PC-3 (cell line): ENCODE measurements at regions of chr2 and their contacts with region 1.

Region 1: DNA sequence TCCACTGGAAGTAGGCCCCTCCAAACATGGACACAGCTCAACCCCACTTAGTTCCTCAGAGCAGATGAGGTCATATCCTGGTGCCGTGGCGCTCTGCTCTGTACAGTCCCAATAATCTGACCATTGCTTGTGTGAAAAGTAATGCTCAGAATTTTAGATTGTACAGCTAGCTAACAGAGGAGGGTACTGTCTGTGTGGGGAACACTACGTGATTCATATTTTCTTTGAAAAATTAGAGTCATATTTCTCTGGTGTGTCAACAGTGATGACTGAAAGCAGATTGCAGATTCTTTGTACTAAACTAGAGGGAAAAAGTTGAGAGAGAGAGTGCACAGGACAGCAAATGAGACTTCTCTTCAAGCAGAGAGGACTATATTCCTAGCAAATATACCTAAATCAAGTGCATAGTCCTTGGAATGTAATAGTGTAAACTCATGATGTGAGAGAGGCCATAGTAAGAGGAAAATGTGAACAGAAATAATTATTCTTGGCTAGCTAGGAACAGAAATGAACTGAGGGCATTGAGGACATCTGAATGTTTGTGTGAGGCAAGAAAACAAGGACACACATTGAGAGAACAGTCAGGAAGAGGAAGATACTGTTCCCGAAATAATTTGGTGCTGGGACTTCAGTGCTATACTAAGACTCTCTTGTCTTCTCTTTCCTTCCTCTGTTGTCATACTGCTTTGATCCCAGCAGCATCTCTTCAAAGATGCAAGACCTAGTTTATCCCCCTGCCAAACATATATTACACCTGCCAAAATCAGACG is 157.0 kb upstream of the RND3 start:
- DNase-seq: peak; percentile 92
- ATAC-seq: peak; percentile 99
- H3K4me3 ChIP-seq: 0 out of 2 replicates have a peak overlapping the region, but pooled peaks have one; percentile 7
- H3K27ac ChIP-seq: peak overlapping the region; percentile 83
- H3K4me1 ChIP-seq: peaks cover 42% of the 10 kb centered on the region
- H3K27me3 ChIP-seq: no peaks in the 10 kb centered on the region
- CTCF ChIP-seq: no peak

Region 2: GRCh38 chr2:150750720-150751119 is 106.2 kb after region 1 on chr2:
- CTCF ChIA-PET with region 1: no interaction called
- POLR2A ChIA-PET with region 1: no interaction called
- intact Hi-C with region 1: no loop called
- DNase-seq: no peak
- ATAC-seq: no peak
- H3K4me3 ChIP-seq: no peak overlapping the region
- H3K27ac ChIP-seq: no peak overlapping the region
- H3K4me1 ChIP-seq: no peaks in the 10 kb centered on the region
- H3K27me3 ChIP-seq: no peaks in the 10 kb centered on the region
- CTCF ChIP-seq: no peak

Region 3: DNA sequence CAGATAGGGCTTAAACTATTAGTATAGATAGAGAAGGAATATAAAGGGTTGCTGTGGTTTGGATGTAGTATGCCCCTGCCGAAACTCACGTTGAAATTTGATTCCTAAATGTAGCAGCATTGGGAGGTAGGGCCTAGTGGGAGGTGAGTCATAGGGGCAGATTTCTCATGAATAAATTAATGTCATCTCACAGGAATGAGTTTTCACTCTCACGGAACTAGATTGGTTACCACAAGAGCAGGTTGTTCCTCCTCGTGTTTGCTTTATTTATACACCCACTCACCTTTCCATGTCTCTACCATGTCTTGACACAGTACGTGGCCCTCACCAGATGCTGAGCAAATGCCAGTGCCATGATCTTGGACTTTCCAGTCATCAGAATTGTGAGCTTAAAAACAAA is 399.0 kb after region 1 on chr2:
- CTCF ChIA-PET with region 1: no interaction called
- POLR2A ChIA-PET with region 1: no interaction called
- intact Hi-C with region 1: loop called (anchors 2 kb)
- DNase-seq: peak; percentile 96
- ATAC-seq: peak; percentile 99
- H3K4me3 ChIP-seq: no peak overlapping the region
- H3K27ac ChIP-seq: peak overlapping the region; percentile 92
- H3K4me1 ChIP-seq: peaks cover 15% of the 10 kb centered on the region
- H3K27me3 ChIP-seq: no peaks in the 10 kb centered on the region
- CTCF ChIP-seq: no peak